Dorsolateral prefrontal cortex (tissue), 120 donors: ENCODE measurements at regions of chr3 and their contacts with region 1.

Region 1: DNA sequence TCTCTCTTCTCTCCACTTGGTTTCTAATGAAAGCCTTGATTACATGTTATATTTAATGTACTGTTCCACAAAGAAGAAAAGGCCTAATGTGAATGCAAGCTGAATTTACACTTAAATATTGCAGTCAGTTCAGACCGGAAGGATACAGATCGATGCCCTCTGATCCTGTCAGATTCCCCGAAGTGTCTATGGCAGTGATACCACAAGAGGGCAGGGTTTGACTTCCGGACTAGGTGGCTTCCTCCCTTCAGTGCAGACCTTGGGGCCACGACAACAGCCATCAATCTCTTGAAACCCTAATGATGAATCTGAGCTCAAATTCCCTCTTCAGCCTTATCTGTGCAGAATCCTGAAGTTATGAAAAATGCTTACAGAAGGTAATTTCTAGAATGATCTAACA is 29.5 kb downstream of the AGTR1 start:
- DNase-seq: peak; percentile 35 to 77 (median 60)
- H3K4me3 ChIP-seq: peak overlapping the region in 2 of 59 donors; percentile 6 to 28
- H3K27ac ChIP-seq: peak overlapping the region in 3 of 59 donors; percentile 6 to 16 (median 14)
- H3K27me3 ChIP-seq: peaks cover 0 to 4% (median 0%) of the 10 kb centered on the region in 45 donors
- CTCF ChIP-seq: peak in 55 of 56 donors; percentile 47 to 87 (median 71)

Region 2: DNA sequence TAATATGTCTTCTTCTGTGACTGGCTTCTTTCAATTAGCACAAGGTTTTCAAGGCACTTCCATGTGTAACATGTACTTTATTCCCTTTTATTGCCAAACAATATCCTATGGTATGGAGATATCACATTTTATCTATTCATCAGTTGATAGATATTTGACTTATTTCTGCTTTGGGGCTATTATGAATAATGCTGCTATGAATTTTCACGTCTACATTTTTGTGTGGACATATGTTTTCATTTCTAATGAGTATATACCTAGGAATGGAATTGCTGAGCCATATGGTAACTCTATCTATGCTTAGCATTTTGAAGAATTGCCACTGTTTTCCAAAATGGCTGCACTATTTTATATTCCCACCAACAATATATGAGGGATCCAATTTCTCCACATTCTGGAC is 33.1 kb before region 1 on chr3:
- intact Hi-C with region 1: no loop called
- DNase-seq: no peak
- H3K4me3 ChIP-seq: no peak overlapping the region
- H3K27ac ChIP-seq: no peak overlapping the region
- H3K27me3 ChIP-seq: peaks cover 0 to 17% (median 7%) of the 10 kb centered on the region in 45 donors
- CTCF ChIP-seq: no peak

Region 3: GRCh38 chr3:148790851-148791735 is 63.8 kb after region 1 on chr3:
- intact Hi-C with region 1: loop called in 1 of 2 experiments (anchors 1 kb)
- DNase-seq: peak in 8 of 10 donors; percentile 42 to 84 (median 54)
- H3K4me3 ChIP-seq: peak overlapping the region in 55 of 59 donors; percentile 1 to 64 (median 37)
- H3K27ac ChIP-seq: peak overlapping the region; percentile 57 to 99 (median 94)
- H3K27me3 ChIP-seq: no peaks in the 10 kb centered on the region
- CTCF ChIP-seq: peak in 4 of 56 donors; percentile 9 to 15 (median 11)

Region 4: GRCh38 chr3:148861277-148861869 is 134.1 kb after region 1 on chr3:
- intact Hi-C with region 1: loop called (anchors 5 kb)
- DNase-seq: no peak
- H3K4me3 ChIP-seq: no peak overlapping the region
- H3K27ac ChIP-seq: no peak overlapping the region
- H3K27me3 ChIP-seq: peaks cover 0 to 2% (median 0%) of the 10 kb centered on the region in 45 donors
- CTCF ChIP-seq: peak; percentile 64 to 95 (median 79)

Region 5: GRCh38 chr3:148943506-148944205 is 216.4 kb after region 1 on chr3:
- intact Hi-C with region 1: loop called (anchors 2 kb)
- DNase-seq: peak in 3 of 10 donors; percentile 7 to 57 (median 37)
- H3K4me3 ChIP-seq: no peak overlapping the region
- H3K27ac ChIP-seq: peak overlapping the region in 1 of 59 donors; percentile 14
- H3K27me3 ChIP-seq: no peaks in the 10 kb centered on the region
- CTCF ChIP-seq: peak; percentile 63 to 93 (median 85)

Region 6: GRCh38 chr3:148948913-148949657 is 221.8 kb after region 1 on chr3:
- intact Hi-C with region 1: loop called (anchors 2 kb)
- DNase-seq: no peak
- H3K4me3 ChIP-seq: no peak overlapping the region
- H3K27ac ChIP-seq: no peak overlapping the region
- H3K27me3 ChIP-seq: no peaks in the 10 kb centered on the region
- CTCF ChIP-seq: no peak